ENCODE measurements at regions of chr1 and their contacts with region 1.

Region 1: DNA sequence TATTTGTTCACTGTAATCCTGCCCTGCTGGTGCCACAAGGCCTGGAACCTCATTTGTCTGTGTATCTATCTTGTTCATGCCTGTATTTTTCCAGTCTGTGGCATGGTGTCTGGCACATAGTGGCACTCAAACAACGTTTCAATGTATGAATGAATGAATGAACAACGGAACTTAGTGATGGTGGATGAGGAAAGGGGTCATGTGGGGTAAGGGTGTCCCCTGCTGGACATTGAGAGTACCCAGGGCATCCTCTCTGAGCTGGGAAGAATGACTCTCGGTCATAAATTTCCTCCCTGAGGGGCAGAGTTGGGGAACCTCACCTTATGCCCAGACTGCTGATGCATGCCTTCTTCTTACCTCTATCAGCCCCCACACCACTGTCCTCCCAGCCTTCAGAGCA is 18.9 kb upstream of the ZNF683 start:
- DNase-seq: peak; percentile 78
- H3K4me3 Mint-ChIP-seq: no peak overlapping the region
- H3K27ac Mint-ChIP-seq: no peak overlapping the region
- H3K4me1 Mint-ChIP-seq: peaks cover 14% of the 10 kb centered on the region
- H3K27me3 Mint-ChIP-seq: no peaks in the 10 kb centered on the region
- CTCF ChIP-seq: peak; percentile 91

Region 2: GRCh38 chr1:26035959-26036755 is 355.3 kb before region 1 on chr1:
- CTCF ChIA-PET with region 1: no interaction called
- POLR2A ChIA-PET with region 1: no interaction called
- intact Hi-C with region 1: loop called (anchors 5 kb)
- DNase-seq: peak; percentile 70
- H3K4me3 Mint-ChIP-seq: peak overlapping the region; percentile 94
- H3K27ac Mint-ChIP-seq: peak overlapping the region; percentile 61
- H3K4me1 Mint-ChIP-seq: peaks cover 11% of the 10 kb centered on the region
- H3K27me3 Mint-ChIP-seq: no peaks in the 10 kb centered on the region
- CTCF ChIP-seq: peak; percentile 96

Region 3: DNA sequence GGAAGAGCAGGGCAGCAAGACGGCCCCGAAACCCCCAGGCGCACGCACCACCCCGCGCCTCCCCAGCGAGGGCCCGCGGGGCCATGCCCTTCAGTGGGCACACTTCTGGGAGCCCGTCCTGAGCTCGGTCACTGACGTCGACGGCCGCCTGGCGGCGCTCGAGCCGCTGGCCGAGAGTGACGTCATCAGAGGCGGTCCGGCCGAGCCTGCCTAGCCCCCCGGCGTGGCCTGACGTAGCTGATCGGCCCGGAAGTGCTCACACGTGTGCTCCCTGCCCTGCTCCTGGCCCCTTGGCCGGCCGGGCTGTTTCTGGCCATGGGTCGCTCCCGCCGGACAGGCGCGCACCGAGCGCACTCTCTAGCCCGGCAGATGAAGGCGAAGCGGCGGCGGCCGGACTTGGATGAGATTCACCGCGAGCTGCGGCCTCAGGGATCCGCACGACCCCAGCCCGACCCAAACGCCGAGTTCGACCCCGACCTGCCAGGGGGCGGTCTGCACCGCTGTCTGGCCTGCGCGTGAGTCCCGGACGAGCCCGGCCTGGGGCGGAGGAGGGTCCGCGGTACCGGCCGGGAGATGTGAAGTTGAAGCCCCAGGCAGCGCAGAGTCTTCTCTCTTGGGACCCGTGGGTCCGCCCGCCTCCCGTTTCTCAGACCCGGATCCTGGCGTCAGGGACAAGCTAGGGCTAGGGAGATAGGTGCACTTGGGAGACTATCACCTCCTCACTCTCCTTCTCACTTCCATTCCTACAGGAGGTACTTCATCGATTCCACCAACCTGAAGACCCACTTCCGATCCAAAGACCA is 221.6 kb before region 1 on chr1 and contains the start of gene ZNF593:
- CTCF ChIA-PET with region 1: no interaction called
- POLR2A ChIA-PET with region 1: no interaction called
- intact Hi-C with region 1: loop called (anchors 5 kb)
- DNase-seq: peak; percentile 86
- H3K4me3 Mint-ChIP-seq: peak within 1 kb of the TSS; percentile 86
- H3K27ac Mint-ChIP-seq: peak within 1 kb of the TSS; percentile 93
- H3K4me1 Mint-ChIP-seq: no peaks in the 10 kb centered on the region
- H3K27me3 Mint-ChIP-seq: no peaks in the 10 kb centered on the region
- CTCF ChIP-seq: peak; percentile 91
- total RNA-seq, gene ZNF593: 61.5 and 82.6 TPM in 2 replicates

Region 4: GRCh38 chr1:26284597-26285360 is 106.7 kb before region 1 on chr1:
- CTCF ChIA-PET with region 1: interaction called, 5 read pairs
- POLR2A ChIA-PET with region 1: no interaction called
- intact Hi-C with region 1: loop called (anchors 1 kb)
- DNase-seq: peak; percentile 89
- H3K4me3 Mint-ChIP-seq: no peak overlapping the region
- H3K27ac Mint-ChIP-seq: peak overlapping the region; percentile 8
- H3K4me1 Mint-ChIP-seq: peaks cover 40% of the 10 kb centered on the region
- H3K27me3 Mint-ChIP-seq: no peaks in the 10 kb centered on the region
- CTCF ChIP-seq: peak; percentile 82

Region 5: GRCh38 chr1:26363549-26364448 is 27.7 kb before region 1 on chr1:
- CTCF ChIA-PET with region 1: interaction called, 11 read pairs
- POLR2A ChIA-PET with region 1: interaction called, 3 read pairs
- intact Hi-C with region 1: no loop called
- DNase-seq: peak; percentile 75
- H3K4me3 Mint-ChIP-seq: no peak overlapping the region
- H3K27ac Mint-ChIP-seq: no peak overlapping the region
- H3K4me1 Mint-ChIP-seq: peaks cover 14% of the 10 kb centered on the region
- H3K27me3 Mint-ChIP-seq: no peaks in the 10 kb centered on the region
- CTCF ChIP-seq: peak; percentile 93

Measured in MCF 10A (cell line).